CD4-positive, alpha-beta T cell (primary cell): ENCODE measurements at regions of chr6 and their contacts with region 1.

Region 1: GRCh38 chr6:42928986-42929820 is at the start of gene CNPY3:
- DNase-seq: peak; percentile 90 to 98 (median 92)
- ATAC-seq: peak; percentile 75
- H3K4me3 ChIP-seq: peak within 1 kb of the TSS; percentile 79
- H3K4me3 Mint-ChIP-seq: peak within 1 kb of the TSS; percentile 99
- H3K27ac ChIP-seq: peak within 1 kb of the TSS; percentile 88 to 96
- H3K27ac Mint-ChIP-seq: peak within 1 kb of the TSS; percentile 99
- H3K4me1 ChIP-seq: peaks cover 52% of the 10 kb centered on the region
- H3K4me1 Mint-ChIP-seq: peaks cover 53% of the 10 kb centered on the region
- H3K27me3 ChIP-seq: no peaks in the 10 kb centered on the region
- H3K27me3 Mint-ChIP-seq: no peaks in the 10 kb centered on the region
- CTCF ChIP-seq: no peak
- total RNA-seq, gene CNPY3: 41.2 to 43.8 TPM

Region 2: DNA sequence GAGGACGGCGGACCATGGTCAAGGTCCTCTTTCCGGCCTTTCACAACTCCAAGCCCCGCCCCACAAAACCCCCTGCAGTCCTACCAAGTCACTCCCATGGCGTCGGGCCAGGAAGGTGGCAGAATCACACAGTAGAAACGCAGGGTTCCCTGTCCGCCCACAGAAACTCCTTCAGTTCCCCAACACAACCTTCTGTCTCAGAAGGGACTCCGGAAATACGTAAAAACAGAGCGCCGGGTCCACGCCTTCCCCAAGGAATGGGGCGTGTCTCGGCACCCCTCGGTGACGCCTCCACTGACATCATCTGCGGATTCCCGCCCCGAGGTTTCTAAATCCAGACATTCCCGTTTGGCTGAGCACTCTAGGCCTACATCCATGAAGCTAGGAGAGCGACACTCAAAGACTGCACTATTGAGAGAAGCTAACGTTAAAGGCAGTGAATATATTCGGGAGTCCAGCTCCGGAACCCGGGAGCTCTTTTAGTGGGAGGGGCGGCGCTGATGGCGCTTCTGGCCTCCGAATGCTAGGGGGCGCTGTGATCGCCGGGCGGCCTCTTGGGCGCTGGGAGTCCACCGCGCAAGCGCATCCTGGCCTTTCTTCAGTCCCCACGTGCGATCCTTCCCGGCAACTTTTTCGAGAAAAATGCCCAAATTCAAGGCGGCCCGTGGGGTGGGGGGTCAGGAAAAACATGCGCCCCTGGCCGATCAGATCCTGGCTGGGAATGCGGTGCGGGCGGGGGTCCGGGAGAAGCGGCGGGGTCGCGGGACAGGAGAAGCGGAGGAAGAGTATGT is 1008.1 kb before region 1 on chr6 and contains the starts of genes BYSL and MED20:
- CTCF ChIA-PET with region 1: no interaction called
- POLR2A ChIA-PET with region 1: no interaction called
- intact Hi-C with region 1: no loop called
- DNase-seq: peak; percentile 89 to 97 (median 93)
- ATAC-seq: peak; percentile 90
- H3K4me3 ChIP-seq: peak within 1 kb of the TSS; percentile 78
- H3K4me3 Mint-ChIP-seq: peak within 1 kb of the TSS; percentile 99
- H3K27ac ChIP-seq: peak within 1 kb of the TSS; percentile 97 to 98
- H3K27ac Mint-ChIP-seq: peak within 1 kb of the TSS; percentile 94
- H3K4me1 ChIP-seq: peaks cover 31% of the 10 kb centered on the region
- H3K4me1 Mint-ChIP-seq: peaks cover 55% of the 10 kb centered on the region
- H3K27me3 ChIP-seq: no peaks in the 10 kb centered on the region
- H3K27me3 Mint-ChIP-seq: no peaks in the 10 kb centered on the region
- CTCF ChIP-seq: peak; percentile 97
- total RNA-seq, gene BYSL: 1.2 to 1.6 TPM
- total RNA-seq, gene MED20: 1.3 to 1.6 TPM

Region 3: GRCh38 chr6:42563697-42564505 is 365.3 kb before region 1 on chr6 and contains the start of gene UBR2:
- CTCF ChIA-PET with region 1: no interaction called
- POLR2A ChIA-PET with region 1: interaction called, 13 read pairs
- intact Hi-C with region 1: no loop called
- DNase-seq: peak; percentile 81 to 98 (median 90)
- ATAC-seq: peak; percentile 95
- H3K4me3 ChIP-seq: peak within 1 kb of the TSS; percentile 99
- H3K4me3 Mint-ChIP-seq: peak within 1 kb of the TSS; percentile 98
- H3K27ac ChIP-seq: peak within 1 kb of the TSS; percentile 87 to 93
- H3K27ac Mint-ChIP-seq: peak within 1 kb of the TSS; percentile 98
- H3K4me1 ChIP-seq: peaks cover 16% of the 10 kb centered on the region
- H3K4me1 Mint-ChIP-seq: peaks cover 38% of the 10 kb centered on the region
- H3K27me3 ChIP-seq: no peaks in the 10 kb centered on the region
- H3K27me3 Mint-ChIP-seq: no peaks in the 10 kb centered on the region
- CTCF ChIP-seq: peak; percentile 52
- total RNA-seq, gene UBR2: 27.4 to 27.7 TPM

Region 4: GRCh38 chr6:42629845-42630244 is 299.4 kb before region 1 on chr6:
- CTCF ChIA-PET with region 1: no interaction called
- POLR2A ChIA-PET with region 1: no interaction called
- intact Hi-C with region 1: no loop called
- DNase-seq: no peak
- ATAC-seq: no peak
- H3K4me3 ChIP-seq: no peak overlapping the region
- H3K4me3 Mint-ChIP-seq: no peak overlapping the region
- H3K27ac ChIP-seq: no peak overlapping the region
- H3K27ac Mint-ChIP-seq: peak overlapping the region; percentile 45
- H3K4me1 ChIP-seq: no peaks in the 10 kb centered on the region
- H3K4me1 Mint-ChIP-seq: peaks cover 8% of the 10 kb centered on the region
- H3K27me3 ChIP-seq: no peaks in the 10 kb centered on the region
- H3K27me3 Mint-ChIP-seq: no peaks in the 10 kb centered on the region
- CTCF ChIP-seq: no peak

Region 5: GRCh38 chr6:42782622-42783176 is 146.5 kb before region 1 on chr6:
- CTCF ChIA-PET with region 1: no interaction called
- POLR2A ChIA-PET with region 1: interaction called, 22 read pairs
- intact Hi-C with region 1: no loop called
- DNase-seq: peak; percentile 69 to 90 (median 77)
- ATAC-seq: peak; percentile 60
- H3K4me3 ChIP-seq: peak overlapping the region; percentile 81
- H3K4me3 Mint-ChIP-seq: peak overlapping the region; percentile 100
- H3K27ac ChIP-seq: peak overlapping the region; percentile 100
- H3K27ac Mint-ChIP-seq: no peak overlapping the region
- H3K4me1 ChIP-seq: peaks cover 51% of the 10 kb centered on the region
- H3K4me1 Mint-ChIP-seq: peaks cover 30% of the 10 kb centered on the region
- H3K27me3 ChIP-seq: no peaks in the 10 kb centered on the region
- H3K27me3 Mint-ChIP-seq: no peaks in the 10 kb centered on the region
- CTCF ChIP-seq: no peak

Region 6: DNA sequence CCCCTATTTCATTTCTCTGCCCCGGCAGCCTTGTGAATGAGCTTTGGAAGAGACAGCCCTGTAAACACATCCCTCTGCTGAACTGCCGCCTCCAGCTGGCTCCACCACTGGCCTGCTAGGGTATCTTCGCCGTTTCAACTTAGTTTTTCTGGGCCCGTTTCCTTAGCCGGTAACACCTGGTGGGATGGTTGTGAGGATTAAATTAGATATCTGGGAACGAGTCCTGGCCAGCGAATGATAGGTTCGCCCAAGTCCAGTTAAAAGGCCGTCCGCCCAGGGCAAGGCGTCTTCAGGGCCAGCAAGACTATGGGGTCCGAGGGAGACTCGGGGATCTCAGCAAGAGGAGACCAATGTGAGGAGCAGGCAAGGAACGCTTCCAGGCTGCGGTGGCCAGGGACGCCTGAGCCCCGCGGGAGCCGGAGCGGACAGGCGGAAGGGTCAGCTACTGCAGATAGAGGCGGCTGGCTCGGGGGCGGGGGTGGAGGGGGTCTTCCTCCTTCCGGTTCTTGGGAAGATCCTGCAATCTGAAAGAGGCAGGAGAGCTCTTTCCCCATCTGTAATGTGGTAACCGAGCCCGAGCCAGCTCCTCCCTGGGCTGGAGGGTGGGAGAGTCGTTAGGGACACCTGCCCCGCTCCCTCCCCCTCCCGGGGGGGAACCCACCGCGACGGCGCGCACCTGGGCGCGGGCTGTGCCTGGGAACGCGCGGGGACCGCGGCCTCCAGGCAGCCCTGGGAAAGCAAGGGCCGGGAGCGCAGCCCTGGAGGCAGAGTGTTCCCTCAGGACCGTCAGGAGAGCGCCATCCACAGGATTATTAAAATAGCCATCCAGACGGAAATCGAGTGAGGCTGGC is 17.8 kb before region 1 on chr6:
- CTCF ChIA-PET with region 1: no interaction called
- POLR2A ChIA-PET with region 1: interaction called, 12 read pairs
- intact Hi-C with region 1: no loop called
- DNase-seq: no peak
- ATAC-seq: peak; percentile 41
- H3K4me3 ChIP-seq: no peak overlapping the region
- H3K4me3 Mint-ChIP-seq: peak overlapping the region; percentile 39
- H3K27ac ChIP-seq: no peak overlapping the region
- H3K27ac Mint-ChIP-seq: no peak overlapping the region
- H3K4me1 ChIP-seq: peaks cover 8% of the 10 kb centered on the region
- H3K4me1 Mint-ChIP-seq: peaks cover 4% of the 10 kb centered on the region
- H3K27me3 ChIP-seq: peaks cover 7 to 10% of the 10 kb centered on the region in 2 experiments
- H3K27me3 Mint-ChIP-seq: peaks cover 17% of the 10 kb centered on the region
- CTCF ChIP-seq: no peak

Region 7: GRCh38 chr6:43013843-43014433 is 84.7 kb after region 1 on chr6 and contains the starts of genes KLHDC3 and MEA1:
- CTCF ChIA-PET with region 1: interaction called, 3 read pairs
- POLR2A ChIA-PET with region 1: interaction called, 64 read pairs
- intact Hi-C with region 1: loop called in 1 of 2 experiments (anchors 2 kb)
- DNase-seq: peak; percentile 95 to 100 (median 98)
- ATAC-seq: peak; percentile 91
- H3K4me3 ChIP-seq: peak within 1 kb of the TSS; percentile 86
- H3K4me3 Mint-ChIP-seq: peak within 1 kb of the TSS; percentile 88
- H3K27ac ChIP-seq: peak within 1 kb of the TSS; percentile 51 to 59
- H3K27ac Mint-ChIP-seq: peak within 1 kb of the TSS; percentile 81
- H3K4me1 ChIP-seq: peaks cover 55% of the 10 kb centered on the region
- H3K4me1 Mint-ChIP-seq: peaks cover 59% of the 10 kb centered on the region
- H3K27me3 ChIP-seq: no peaks in the 10 kb centered on the region
- H3K27me3 Mint-ChIP-seq: no peaks in the 10 kb centered on the region
- CTCF ChIP-seq: no peak
- total RNA-seq, gene KLHDC3: 21.0 to 22.3 TPM
- total RNA-seq, gene MEA1: 13.6 to 17.0 TPM

Region 8: GRCh38 chr6:43059168-43060033 is 130.2 kb after region 1 on chr6 and contains the starts of genes KLC4 and MRPL2:
- CTCF ChIA-PET with region 1: no interaction called
- POLR2A ChIA-PET with region 1: interaction called, 50 read pairs
- intact Hi-C with region 1: loop called in 1 of 2 experiments (anchors 2 kb)
- DNase-seq: peak; percentile 94 to 99 (median 97)
- ATAC-seq: peak; percentile 97
- H3K4me3 ChIP-seq: peak within 1 kb of the TSS; percentile 89
- H3K4me3 Mint-ChIP-seq: peak within 1 kb of the TSS; percentile 91
- H3K27ac ChIP-seq: peak within 1 kb of the TSS; percentile 85 to 95
- H3K27ac Mint-ChIP-seq: peak within 1 kb of the TSS; percentile 96
- H3K4me1 ChIP-seq: peaks cover 29% of the 10 kb centered on the region
- H3K4me1 Mint-ChIP-seq: peaks cover 50% of the 10 kb centered on the region
- H3K27me3 ChIP-seq: no peaks in the 10 kb centered on the region
- H3K27me3 Mint-ChIP-seq: no peaks in the 10 kb centered on the region
- CTCF ChIP-seq: no peak
- total RNA-seq, gene KLC4: 39.6 to 40.8 TPM
- total RNA-seq, gene MRPL2: 42.8 to 48.0 TPM

Region 9: DNA sequence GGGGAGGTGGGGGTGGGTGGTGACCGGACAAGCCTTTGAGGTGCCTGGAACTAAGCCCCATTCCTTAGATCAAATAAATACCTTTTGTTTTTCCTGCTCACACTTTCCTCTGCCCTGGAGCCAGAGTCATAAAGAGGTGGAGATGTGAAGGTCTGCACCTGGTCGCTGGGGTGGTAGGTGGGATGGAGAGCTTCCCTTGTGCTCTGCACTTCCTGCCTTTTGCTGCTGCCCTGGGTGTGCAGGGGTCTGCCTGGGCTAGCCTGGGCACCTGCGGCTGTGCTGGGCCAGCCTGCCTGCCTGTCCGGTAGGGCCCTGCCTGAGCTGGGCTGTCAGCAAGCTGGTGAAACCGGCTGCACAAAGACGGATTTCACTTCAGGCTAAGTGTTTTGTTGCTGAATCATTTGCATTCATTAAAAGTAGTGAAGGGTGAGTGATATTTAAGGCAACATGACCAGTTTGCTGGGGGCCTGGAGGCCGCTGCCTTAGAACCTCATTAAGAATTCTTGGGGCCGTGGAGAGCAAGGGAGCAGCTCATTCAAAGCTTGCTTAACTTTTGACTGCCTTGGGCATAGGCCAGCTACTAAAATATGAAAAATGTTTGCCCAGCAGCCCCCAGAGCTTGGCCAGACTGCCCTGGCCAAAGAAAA is 167.4 kb after region 1 on chr6:
- CTCF ChIA-PET with region 1: no interaction called
- POLR2A ChIA-PET with region 1: no interaction called
- intact Hi-C with region 1: no loop called
- DNase-seq: no peak
- ATAC-seq: no peak
- H3K4me3 ChIP-seq: no peak overlapping the region
- H3K4me3 Mint-ChIP-seq: no peak overlapping the region
- H3K27ac ChIP-seq: no peak overlapping the region
- H3K27ac Mint-ChIP-seq: no peak overlapping the region
- H3K4me1 ChIP-seq: no peaks in the 10 kb centered on the region
- H3K4me1 Mint-ChIP-seq: peaks cover 24% of the 10 kb centered on the region
- H3K27me3 ChIP-seq: no peaks in the 10 kb centered on the region
- H3K27me3 Mint-ChIP-seq: no peaks in the 10 kb centered on the region
- CTCF ChIP-seq: no peak

Region 10: DNA sequence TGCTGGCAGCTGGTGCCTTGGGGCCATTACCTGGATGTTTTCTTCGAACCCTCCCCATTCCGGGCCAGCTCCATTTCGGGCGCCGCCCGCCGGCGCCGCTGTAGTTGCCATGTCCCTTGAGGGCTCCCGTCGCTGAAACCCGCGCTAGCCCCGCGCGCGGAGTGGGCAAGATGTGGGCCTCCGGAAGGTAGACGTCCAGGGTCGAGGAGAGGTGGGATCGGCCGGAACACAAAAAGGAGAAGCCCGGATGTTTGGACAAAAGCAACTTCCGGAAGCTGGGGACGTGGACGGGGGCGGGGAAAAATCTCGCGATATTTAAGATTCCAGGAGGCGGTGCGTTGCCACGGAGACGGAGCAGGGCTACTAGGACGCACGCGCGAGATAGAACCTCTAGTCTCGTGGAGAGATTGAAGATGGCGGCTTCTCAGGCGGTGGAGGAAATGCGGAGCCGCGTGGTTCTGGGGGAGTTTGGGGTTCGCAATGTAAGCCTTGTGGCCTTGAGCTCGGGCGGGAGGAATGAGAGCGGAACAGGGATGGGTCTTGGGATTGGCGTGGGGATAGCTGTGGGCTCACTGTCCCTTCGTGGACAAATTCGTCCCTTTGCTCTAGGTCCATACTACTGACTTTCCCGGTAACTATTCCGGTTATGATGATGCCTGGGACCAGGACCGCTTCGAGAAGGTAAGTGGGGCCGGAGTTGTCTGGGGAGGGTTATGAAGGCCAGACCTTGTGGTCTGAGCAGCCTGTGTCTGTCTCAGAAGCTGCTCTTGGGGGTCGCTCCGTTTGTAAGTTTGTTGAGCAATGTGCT is 587.7 kb after region 1 on chr6 and contains the starts of genes POLR1C and YIPF3:
- CTCF ChIA-PET with region 1: no interaction called
- POLR2A ChIA-PET with region 1: no interaction called
- intact Hi-C with region 1: loop called in 1 of 2 experiments (anchors 5 kb)
- DNase-seq: peak; percentile 91 to 98 (median 96)
- ATAC-seq: peak; percentile 96
- H3K4me3 ChIP-seq: peak within 1 kb of the TSS; percentile 100
- H3K4me3 Mint-ChIP-seq: no peak within 1 kb of the TSS
- H3K27ac ChIP-seq: peak within 1 kb of the TSS; percentile 81 to 90
- H3K27ac Mint-ChIP-seq: no peak within 1 kb of the TSS
- H3K4me1 ChIP-seq: peaks cover 43% of the 10 kb centered on the region
- H3K4me1 Mint-ChIP-seq: peaks cover 33% of the 10 kb centered on the region
- H3K27me3 ChIP-seq: no peaks in the 10 kb centered on the region
- H3K27me3 Mint-ChIP-seq: no peaks in the 10 kb centered on the region
- CTCF ChIP-seq: no peak
- total RNA-seq, gene POLR1C: 46.6 to 47.8 TPM
- total RNA-seq, gene YIPF3: 36.5 to 37.9 TPM